Caco-2 (cell line): ENCODE measurements at regions of chr1 and their contacts with region 1.

Region 1: DNA sequence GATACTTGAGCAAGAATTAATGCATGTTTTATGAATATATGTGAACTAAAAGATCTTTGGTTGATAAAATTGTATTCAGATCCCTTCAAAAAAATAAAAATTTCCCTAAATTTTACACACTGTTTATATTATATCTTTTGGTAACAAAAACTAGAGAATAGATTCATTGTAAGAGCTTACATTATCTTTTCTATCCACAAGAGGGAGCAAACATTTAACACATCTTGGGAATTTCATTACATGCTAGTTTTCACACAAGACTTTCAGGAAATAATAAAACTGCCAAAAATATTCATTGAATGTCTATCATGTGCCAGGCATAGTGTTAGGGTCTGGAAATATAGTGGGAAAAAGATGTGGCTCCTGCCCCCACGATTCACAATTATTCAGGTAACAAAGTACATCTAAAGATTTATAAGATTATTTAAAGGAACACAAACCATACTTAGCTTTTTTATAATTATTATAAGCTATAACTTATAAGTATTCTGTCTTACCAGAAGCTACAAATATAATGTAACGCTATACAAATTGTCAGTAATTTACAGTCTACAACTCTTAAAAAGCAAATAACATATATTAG is 30.6 kb downstream of the FAF1 start:
- DNase-seq: no peak
- H3K4me3 ChIP-seq: no peak overlapping the region
- H3K4me3 Mint-ChIP-seq: no peak overlapping the region
- H3K27ac Mint-ChIP-seq: no peak overlapping the region
- H3K4me1 ChIP-seq: no peaks in the 10 kb centered on the region
- H3K4me1 Mint-ChIP-seq: no peaks in the 10 kb centered on the region
- H3K27me3 ChIP-seq: no peaks in the 10 kb centered on the region
- H3K27me3 Mint-ChIP-seq: no peaks in the 10 kb centered on the region
- CTCF ChIP-seq: peak; percentile 32 to 38

Region 2: DNA sequence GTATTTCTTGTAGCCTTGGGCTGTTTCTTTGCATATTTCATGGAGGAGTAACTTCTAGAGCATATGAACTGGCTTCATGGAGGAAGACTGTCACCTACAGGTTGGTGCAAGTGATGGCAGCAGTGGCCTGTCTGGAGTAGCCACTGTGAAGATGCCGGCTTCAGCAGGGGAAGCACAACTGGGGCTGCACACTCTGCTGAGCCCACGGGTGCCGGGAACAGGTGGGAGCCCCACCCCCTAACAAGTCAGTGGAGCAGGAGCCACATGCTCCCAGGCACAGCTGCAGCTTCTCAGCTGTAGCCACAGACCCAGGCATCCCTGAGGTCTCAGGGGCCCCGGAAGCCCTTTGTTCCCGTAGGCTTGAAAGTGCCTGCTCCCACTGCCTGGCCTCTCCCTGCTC is 129.4 kb after region 1 on chr1:
- CTCF ChIA-PET with region 1: no interaction called
- POLR2A ChIA-PET with region 1: no interaction called
- intact Hi-C with region 1: loop called (anchors 5 kb)
- DNase-seq: peak in 1 of 2 experiments; percentile 10
- H3K4me3 ChIP-seq: no peak overlapping the region
- H3K4me3 Mint-ChIP-seq: no peak overlapping the region
- H3K27ac Mint-ChIP-seq: no peak overlapping the region
- H3K4me1 ChIP-seq: peaks cover 10% of the 10 kb centered on the region; the same call in 1 of the 2 replicates
- H3K4me1 Mint-ChIP-seq: peaks cover 9% of the 10 kb centered on the region
- H3K27me3 ChIP-seq: no peaks in the 10 kb centered on the region
- H3K27me3 Mint-ChIP-seq: peaks cover 6% of the 10 kb centered on the region
- CTCF ChIP-seq: peak in 1 of 2 experiments; percentile 51